Caco-2 (cell line): ENCODE measurements at regions of chr4 and their contacts with region 1.

Region 1: DNA sequence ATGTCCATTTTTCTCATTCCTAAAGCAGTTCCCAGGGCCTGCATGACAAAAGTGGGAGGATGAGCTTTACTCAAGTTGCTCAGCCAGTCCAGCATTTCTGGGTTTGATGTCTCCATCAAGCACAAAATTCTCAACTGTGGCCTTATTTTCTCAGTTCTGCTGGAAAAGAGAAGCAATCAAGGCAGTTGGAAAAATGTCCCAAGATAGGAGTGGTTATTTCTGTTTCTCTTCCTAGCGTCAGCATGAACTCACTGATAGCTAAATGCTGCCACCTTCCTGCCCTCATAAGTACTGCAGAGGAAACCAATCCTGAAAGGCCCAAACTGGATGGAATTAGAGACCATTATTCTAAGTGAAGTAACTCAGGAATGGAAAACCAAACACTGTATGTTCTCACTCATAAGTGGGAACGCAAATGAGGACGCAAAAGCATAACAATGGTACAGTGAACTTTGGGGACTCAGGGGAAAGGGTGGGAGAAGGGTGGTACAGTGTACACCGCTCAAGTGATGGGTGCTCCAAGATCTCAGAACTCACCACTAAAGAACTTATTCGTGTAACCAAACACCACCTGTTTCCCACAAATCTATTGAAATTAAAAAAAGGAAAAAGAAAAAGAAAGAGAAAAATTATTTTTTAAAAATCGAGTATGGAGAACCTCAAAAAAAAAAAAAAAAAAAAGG is 29.6 kb downstream of the ADH7 start:
- DNase-seq: peak; percentile 69 to 78
- H3K4me3 ChIP-seq: no peak overlapping the region
- H3K4me3 Mint-ChIP-seq: no peak overlapping the region
- H3K27ac Mint-ChIP-seq: peak overlapping the region; percentile 37
- H3K4me1 ChIP-seq: peaks cover 23% of the 10 kb centered on the region
- H3K4me1 Mint-ChIP-seq: peaks cover 11% of the 10 kb centered on the region
- H3K27me3 ChIP-seq: no peaks in the 10 kb centered on the region
- H3K27me3 Mint-ChIP-seq: no peaks in the 10 kb centered on the region
- CTCF ChIP-seq: peak; percentile 77 to 88

Region 2: GRCh38 chr4:98838977-98839618 is 566.5 kb before region 1 on chr4:
- CTCF ChIA-PET with region 1: no interaction called
- POLR2A ChIA-PET with region 1: no interaction called
- intact Hi-C with region 1: no loop called
- DNase-seq: peak; percentile 52 to 56
- H3K4me3 ChIP-seq: no peak overlapping the region
- H3K4me3 Mint-ChIP-seq: no peak overlapping the region
- H3K27ac Mint-ChIP-seq: no peak overlapping the region
- H3K4me1 ChIP-seq: peaks cover 19% of the 10 kb centered on the region
- H3K4me1 Mint-ChIP-seq: peaks cover 6% of the 10 kb centered on the region
- H3K27me3 ChIP-seq: no peaks in the 10 kb centered on the region
- H3K27me3 Mint-ChIP-seq: no peaks in the 10 kb centered on the region
- CTCF ChIP-seq: no peak

Region 3: GRCh38 chr4:98939892-98940298 is 465.7 kb before region 1 on chr4:
- CTCF ChIA-PET with region 1: no interaction called
- POLR2A ChIA-PET with region 1: no interaction called
- intact Hi-C with region 1: loop called (anchors 1 kb)
- DNase-seq: peak in 1 of 2 experiments; percentile 59
- H3K4me3 ChIP-seq: no peak overlapping the region
- H3K4me3 Mint-ChIP-seq: no peak overlapping the region
- H3K27ac Mint-ChIP-seq: no peak overlapping the region
- H3K4me1 ChIP-seq: peaks cover 28% of the 10 kb centered on the region
- H3K4me1 Mint-ChIP-seq: peaks cover 27% of the 10 kb centered on the region
- H3K27me3 ChIP-seq: no peaks in the 10 kb centered on the region
- H3K27me3 Mint-ChIP-seq: no peaks in the 10 kb centered on the region
- CTCF ChIP-seq: peak; percentile 61 to 75

Region 4: GRCh38 chr4:99033956-99034355 is 371.6 kb before region 1 on chr4:
- CTCF ChIA-PET with region 1: no interaction called
- POLR2A ChIA-PET with region 1: no interaction called
- intact Hi-C with region 1: no loop called
- DNase-seq: no peak
- H3K4me3 ChIP-seq: no peak overlapping the region
- H3K4me3 Mint-ChIP-seq: no peak overlapping the region
- H3K27ac Mint-ChIP-seq: peak overlapping the region; percentile 23
- H3K4me1 ChIP-seq: peaks cover 3% of the 10 kb centered on the region
- H3K4me1 Mint-ChIP-seq: peaks cover 9% of the 10 kb centered on the region
- H3K27me3 ChIP-seq: no peaks in the 10 kb centered on the region
- H3K27me3 Mint-ChIP-seq: no peaks in the 10 kb centered on the region
- CTCF ChIP-seq: no peak

Region 5: DNA sequence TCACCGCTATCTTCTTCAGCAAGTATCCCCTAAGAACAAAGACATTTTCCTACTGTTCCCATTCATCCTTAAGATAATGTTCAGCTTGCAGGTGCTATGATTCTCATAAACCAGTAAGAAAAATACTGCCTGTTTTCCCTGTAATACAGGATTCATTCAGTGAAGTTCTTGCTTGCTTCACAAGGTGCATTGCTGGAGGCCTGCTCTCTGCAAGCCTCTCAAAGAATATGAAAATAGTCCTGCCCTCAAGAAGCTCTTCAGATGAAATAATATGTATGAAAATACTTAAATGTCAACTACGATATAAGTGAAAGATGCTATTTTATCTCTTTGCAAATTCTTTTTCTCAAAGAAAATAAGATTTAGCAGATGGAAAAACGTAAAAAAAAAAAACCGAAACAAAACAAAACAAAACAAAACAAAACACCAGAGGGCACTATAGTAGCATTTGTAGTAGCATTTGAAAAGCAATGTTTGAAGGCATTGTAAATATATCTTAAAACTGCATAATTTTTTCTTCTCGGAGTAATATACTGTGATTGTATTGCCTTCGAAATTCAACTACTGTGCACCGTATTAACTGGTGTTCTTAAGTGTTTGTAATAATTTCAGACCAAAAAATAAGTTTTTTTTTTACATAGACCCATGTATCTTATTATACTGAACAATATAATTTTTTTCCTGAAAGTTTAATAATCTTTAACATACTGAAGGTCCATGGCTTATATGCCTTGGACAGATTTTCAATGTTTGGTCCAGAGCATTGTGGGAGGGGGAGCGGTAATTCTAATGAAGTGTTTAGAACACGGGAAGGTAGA is 287.5 kb before region 1 on chr4:
- CTCF ChIA-PET with region 1: no interaction called
- POLR2A ChIA-PET with region 1: no interaction called
- intact Hi-C with region 1: loop called (anchors 1 kb)
- DNase-seq: no peak
- H3K4me3 ChIP-seq: no peak overlapping the region
- H3K4me3 Mint-ChIP-seq: no peak overlapping the region
- H3K27ac Mint-ChIP-seq: no peak overlapping the region
- H3K4me1 ChIP-seq: no peaks in the 10 kb centered on the region
- H3K4me1 Mint-ChIP-seq: no peaks in the 10 kb centered on the region
- H3K27me3 ChIP-seq: no peaks in the 10 kb centered on the region
- H3K27me3 Mint-ChIP-seq: no peaks in the 10 kb centered on the region
- CTCF ChIP-seq: peak in 1 of 2 experiments; percentile 3

Region 6: DNA sequence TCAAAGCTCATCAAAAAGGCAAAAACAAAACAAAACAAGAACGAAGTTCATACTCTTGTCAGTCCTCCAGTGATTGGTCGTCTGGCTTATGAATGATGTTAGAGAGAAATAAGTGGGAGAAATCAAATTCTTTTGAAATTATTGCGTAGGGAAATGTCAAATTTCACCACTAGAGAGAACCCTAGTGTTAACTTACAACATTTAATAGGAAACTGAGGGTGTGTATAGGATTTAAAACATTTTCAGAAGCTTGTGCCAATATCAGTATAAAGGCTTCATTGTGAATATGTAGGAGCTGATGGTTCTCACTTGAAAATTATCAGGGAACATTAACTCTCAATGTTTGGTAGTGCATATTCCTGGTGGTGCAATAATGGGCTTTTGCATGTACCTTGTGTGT is 203.9 kb before region 1 on chr4:
- CTCF ChIA-PET with region 1: no interaction called
- POLR2A ChIA-PET with region 1: no interaction called
- intact Hi-C with region 1: loop called (anchors 2 kb)
- DNase-seq: no peak
- H3K4me3 ChIP-seq: no peak overlapping the region
- H3K4me3 Mint-ChIP-seq: no peak overlapping the region
- H3K27ac Mint-ChIP-seq: no peak overlapping the region
- H3K4me1 ChIP-seq: no peaks in the 10 kb centered on the region
- H3K4me1 Mint-ChIP-seq: peaks cover 12% of the 10 kb centered on the region
- H3K27me3 ChIP-seq: no peaks in the 10 kb centered on the region
- H3K27me3 Mint-ChIP-seq: no peaks in the 10 kb centered on the region
- CTCF ChIP-seq: no peak

Region 7: DNA sequence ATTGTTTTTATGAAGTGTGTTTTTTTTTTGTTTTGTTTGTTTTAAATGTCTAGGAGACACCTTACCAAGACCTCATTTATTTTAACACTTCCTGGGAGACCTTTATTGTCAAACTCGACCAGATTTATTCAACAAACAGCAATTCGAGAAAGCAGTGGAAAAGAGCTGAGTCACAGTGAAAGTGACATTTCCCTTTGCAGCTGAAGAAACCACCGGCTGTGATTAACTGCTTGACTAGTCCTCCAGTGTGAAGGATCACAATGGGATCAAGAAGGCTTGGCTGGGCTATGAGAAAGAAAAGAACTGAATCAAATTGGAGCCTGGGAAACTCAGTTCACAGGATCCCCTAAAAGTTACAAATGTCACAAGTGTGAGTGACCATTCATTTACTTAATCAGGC is 41.5 kb after region 1 on chr4:
- CTCF ChIA-PET with region 1: no interaction called
- POLR2A ChIA-PET with region 1: no interaction called
- intact Hi-C with region 1: no loop called
- DNase-seq: no peak
- H3K4me3 ChIP-seq: no peak overlapping the region
- H3K4me3 Mint-ChIP-seq: no peak overlapping the region
- H3K27ac Mint-ChIP-seq: no peak overlapping the region
- H3K4me1 ChIP-seq: no peaks in the 10 kb centered on the region
- H3K4me1 Mint-ChIP-seq: no peaks in the 10 kb centered on the region
- H3K27me3 ChIP-seq: no peaks in the 10 kb centered on the region
- H3K27me3 Mint-ChIP-seq: no peaks in the 10 kb centered on the region
- CTCF ChIP-seq: no peak

Region 8: DNA sequence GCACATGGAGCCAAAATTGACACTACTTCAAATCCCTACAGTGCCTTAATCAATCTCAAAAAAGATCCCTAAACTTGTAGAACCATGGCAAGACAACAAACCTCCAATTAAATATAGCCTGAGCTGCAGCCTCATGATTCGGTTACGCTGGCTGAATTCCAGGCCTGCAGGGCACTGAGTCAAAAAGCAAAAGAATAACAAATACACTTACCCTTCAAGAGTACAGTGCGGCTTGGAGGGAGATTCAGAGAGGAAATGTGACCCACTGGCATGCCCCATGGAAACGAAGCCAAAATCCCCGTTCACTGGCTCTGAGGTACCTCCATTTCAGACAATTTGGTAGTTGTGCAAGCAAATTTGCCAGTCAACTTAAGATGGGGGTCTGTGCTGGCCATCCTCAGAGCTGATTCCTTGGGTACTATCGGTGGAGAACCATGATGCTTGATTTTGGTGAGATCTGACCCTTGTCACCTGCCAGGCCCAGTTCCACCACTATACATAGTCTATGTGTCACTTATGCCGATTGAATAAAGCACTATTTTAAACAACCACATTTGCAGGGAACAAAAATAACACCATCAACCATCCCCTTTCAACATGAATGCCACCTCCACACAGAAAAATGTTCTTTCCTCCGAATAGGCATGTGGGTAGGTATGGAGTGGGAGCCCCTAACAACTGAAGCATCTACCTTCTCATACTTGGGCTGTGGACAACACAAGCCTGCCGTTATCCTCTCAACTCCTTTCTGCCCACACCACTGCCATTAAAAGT is 249.9 kb after region 1 on chr4:
- CTCF ChIA-PET with region 1: no interaction called
- POLR2A ChIA-PET with region 1: no interaction called
- intact Hi-C with region 1: no loop called
- DNase-seq: no peak
- H3K4me3 ChIP-seq: no peak overlapping the region
- H3K4me3 Mint-ChIP-seq: no peak overlapping the region
- H3K27ac Mint-ChIP-seq: no peak overlapping the region
- H3K4me1 ChIP-seq: no peaks in the 10 kb centered on the region
- H3K4me1 Mint-ChIP-seq: no peaks in the 10 kb centered on the region
- H3K27me3 ChIP-seq: no peaks in the 10 kb centered on the region
- H3K27me3 Mint-ChIP-seq: no peaks in the 10 kb centered on the region
- CTCF ChIP-seq: no peak